SK-N-SH (cell line): ENCODE measurements at regions of chr2 and their contacts with region 1.

Region 1: DNA sequence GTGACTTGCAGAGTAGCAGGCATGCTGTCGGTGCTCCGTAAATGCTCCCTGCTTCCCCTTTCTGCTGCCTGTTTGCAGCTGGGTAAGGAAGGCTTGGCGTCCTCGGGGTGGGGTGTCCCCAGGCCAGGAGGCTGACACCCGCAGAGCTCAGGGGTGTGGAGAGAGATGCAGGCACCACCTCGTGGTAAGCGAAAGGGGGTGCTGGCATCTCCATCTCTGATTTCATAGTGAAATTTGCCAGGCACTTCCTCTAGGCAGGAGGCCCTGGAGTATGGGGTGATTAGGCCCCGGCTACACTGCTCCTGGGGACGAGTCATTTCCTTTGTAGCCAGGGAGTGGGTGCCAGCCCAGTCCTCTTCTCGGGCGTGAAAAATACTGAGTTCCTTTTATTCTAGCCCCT is 160.4 kb downstream of the KLHL29 start:
- DNase-seq: peak; percentile 82
- H3K4me3 ChIP-seq: no peak overlapping the region
- H3K27ac ChIP-seq: peak overlapping the region; percentile 43 to 92; a peak in 3 of 4 replicates
- H3K4me1 ChIP-seq: peaks cover 46 to 84% of the 10 kb centered on the region in 2 experiments; a peak in 3 of 4 replicates
- H3K27me3 ChIP-seq: no peaks in the 10 kb centered on the region
- CTCF ChIP-seq: peak; percentile 48
- EP300 ChIP-seq: no peak; a peak in 1 of 4 replicates
- RAD21 ChIP-seq: peak; percentile 59

Region 2: GRCh38 chr2:23092831-23093230 is 452.6 kb before region 1 on chr2:
- CTCF ChIA-PET with region 1: no interaction called
- POLR2A ChIA-PET with region 1: no interaction called
- DNase-seq: no peak
- H3K4me3 ChIP-seq: no peak overlapping the region
- H3K27ac ChIP-seq: no peak overlapping the region
- H3K4me1 ChIP-seq: peaks cover 0 to 7% of the 10 kb centered on the region in 2 experiments; a peak in 2 of 4 replicates
- H3K27me3 ChIP-seq: no peaks in the 10 kb centered on the region
- CTCF ChIP-seq: no peak
- EP300 ChIP-seq: no peak
- RAD21 ChIP-seq: no peak

Region 3: DNA sequence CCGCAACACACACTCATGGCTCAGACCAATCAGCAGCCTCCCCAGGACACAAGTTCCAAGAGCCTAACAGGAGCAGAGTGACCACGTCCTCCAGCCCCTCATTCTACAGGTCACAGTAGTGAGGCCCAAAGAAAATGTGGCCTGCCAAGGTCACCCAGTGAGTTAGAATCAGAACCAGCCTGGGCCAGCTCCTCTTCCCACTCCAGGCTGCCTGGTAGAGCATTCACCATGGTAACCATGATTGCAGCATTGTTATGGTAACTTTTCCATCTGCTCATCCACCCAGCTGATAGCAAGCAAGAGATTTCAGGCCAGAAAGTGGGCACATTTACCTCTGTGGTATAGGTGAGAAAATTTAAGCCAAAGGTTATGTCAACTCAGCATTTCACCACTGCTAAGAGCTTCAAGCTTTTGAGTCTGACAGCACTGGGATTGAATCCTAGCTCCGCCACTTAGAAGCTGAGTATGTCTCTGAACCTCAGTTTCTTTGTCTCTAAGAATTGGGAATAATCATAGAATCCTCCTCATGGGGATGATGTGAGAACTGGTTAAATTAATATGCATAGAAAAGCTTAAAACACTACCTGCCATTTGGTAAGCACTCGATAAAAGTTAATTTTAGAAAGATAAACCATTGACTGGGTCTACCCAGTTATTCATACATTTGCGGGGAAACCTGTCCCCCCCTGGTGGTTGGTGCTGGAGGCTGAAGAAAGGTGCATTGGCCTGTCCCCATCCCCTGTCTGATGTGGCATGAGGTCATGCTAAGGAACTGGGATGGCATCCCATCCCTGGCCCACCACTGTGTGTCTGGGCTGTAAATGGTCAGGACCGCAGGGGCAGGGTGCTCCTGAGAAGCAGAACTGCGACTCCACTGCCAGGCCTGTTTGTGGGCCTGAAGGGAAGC is 21.1 kb after region 1 on chr2:
- CTCF ChIA-PET with region 1: interaction called, 24 read pairs
- POLR2A ChIA-PET with region 1: no interaction called
- DNase-seq: peak; percentile 75
- H3K4me3 ChIP-seq: no peak overlapping the region
- H3K27ac ChIP-seq: peak overlapping the region in 1 of 2 experiments; percentile 1; a peak in 1 of 4 replicates
- H3K4me1 ChIP-seq: peaks cover 0 to 65% of the 10 kb centered on the region in 2 experiments; a peak in 2 of 4 replicates
- H3K27me3 ChIP-seq: no peaks in the 10 kb centered on the region
- CTCF ChIP-seq: peak; percentile 60
- EP300 ChIP-seq: no peak
- RAD21 ChIP-seq: peak; percentile 63

Region 4: GRCh38 chr2:23583467-23583866 is 38.1 kb after region 1 on chr2:
- CTCF ChIA-PET with region 1: no interaction called
- POLR2A ChIA-PET with region 1: no interaction called
- DNase-seq: no peak
- H3K4me3 ChIP-seq: no peak overlapping the region
- H3K27ac ChIP-seq: no peak overlapping the region
- H3K4me1 ChIP-seq: peaks cover 0 to 11% of the 10 kb centered on the region in 2 experiments; a peak in 2 of 4 replicates
- H3K27me3 ChIP-seq: no peaks in the 10 kb centered on the region
- CTCF ChIP-seq: no peak
- EP300 ChIP-seq: no peak
- RAD21 ChIP-seq: no peak

Region 5: DNA sequence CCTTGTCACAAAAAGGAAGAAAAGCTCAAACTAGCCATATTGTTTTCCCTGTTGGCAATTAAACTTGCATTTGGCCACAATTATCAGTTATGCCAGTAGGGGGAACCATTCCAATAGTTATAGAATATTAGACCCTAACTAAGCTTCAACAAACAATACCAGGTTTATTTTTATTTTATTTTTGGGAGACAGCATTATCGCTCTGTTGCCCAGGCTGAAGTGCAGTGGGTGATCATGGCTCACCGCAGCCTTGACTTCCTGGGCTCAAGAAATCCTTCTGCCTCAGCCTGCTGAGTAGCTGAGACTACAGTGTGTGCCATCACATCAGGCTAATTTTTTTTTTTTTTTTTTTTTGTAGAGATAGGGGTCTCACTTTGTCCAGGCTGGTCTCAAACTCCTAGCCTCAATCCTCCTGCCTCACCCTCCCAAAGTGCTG is 279.4 kb after region 1 on chr2:
- CTCF ChIA-PET with region 1: no interaction called
- POLR2A ChIA-PET with region 1: no interaction called
- DNase-seq: peak; percentile 65
- H3K4me3 ChIP-seq: no peak overlapping the region
- H3K27ac ChIP-seq: no peak overlapping the region
- H3K4me1 ChIP-seq: no peaks in the 10 kb centered on the region; a peak in 1 of 4 replicates
- H3K27me3 ChIP-seq: no peaks in the 10 kb centered on the region
- CTCF ChIP-seq: peak; percentile 94
- EP300 ChIP-seq: no peak
- RAD21 ChIP-seq: peak; percentile 85